ENCODE measurements at regions of chr22 and their contacts with region 1.

Region 1: DNA sequence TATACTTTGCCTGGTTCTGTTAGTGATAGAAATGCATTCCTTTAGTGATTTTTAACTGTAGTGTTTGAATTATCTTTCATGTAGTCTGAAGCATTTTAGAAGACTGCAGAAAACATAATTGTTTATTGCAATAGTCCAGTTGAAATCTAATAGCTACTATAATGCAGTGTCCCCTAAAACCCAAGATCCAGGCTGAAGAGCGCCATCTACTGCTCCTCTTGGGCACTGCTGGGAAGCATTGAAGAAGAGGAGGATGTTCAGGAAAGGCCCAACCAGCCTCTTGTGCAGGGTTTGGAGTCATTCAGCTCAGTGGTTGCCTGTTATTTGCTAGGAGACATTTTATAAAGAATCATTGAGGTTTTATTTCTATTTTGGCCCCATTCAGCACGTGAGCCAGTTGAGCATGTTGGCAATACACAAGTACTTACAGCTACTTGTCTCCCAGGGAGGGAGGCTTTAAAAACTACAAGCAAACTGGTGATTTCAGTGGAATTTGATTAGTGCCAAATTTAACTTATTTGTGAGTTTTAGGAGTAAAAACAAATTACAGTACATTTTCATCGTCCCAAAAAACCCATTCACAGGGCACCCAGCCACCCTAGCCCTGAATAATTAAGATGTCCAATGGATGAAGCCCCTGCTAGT is 74.9 kb upstream of the HORMAD2 start:
- DNase-seq: peak in 32 of 35 experiments; percentile 9 to 74 (median 46)
- ATAC-seq: peak; percentile 64 to 68 (median 67)
- H3K4me3 ChIP-seq: no peak overlapping the region
- H3K4me3 Mint-ChIP-seq: no peak overlapping the region
- H3K27ac ChIP-seq: no peak overlapping the region
- H3K27ac Mint-ChIP-seq: no peak overlapping the region
- H3K4me1 ChIP-seq: no peaks in the 10 kb centered on the region
- H3K4me1 Mint-ChIP-seq: peaks cover 4 to 8% (median 6%) of the 10 kb centered on the region in 3 donors
- H3K27me3 ChIP-seq: no peaks in the 10 kb centered on the region
- H3K27me3 Mint-ChIP-seq: no peaks in the 10 kb centered on the region

Region 2: GRCh38 chr22:29635734-29636357 is 369.5 kb before region 1 on chr22:
- CTCF ChIA-PET with region 1: interaction called in 1 of 2 experiments, 10 read pairs
- POLR2A ChIA-PET with region 1: no interaction called
- DNase-seq: peak in 1 of 35 experiments; percentile 45
- ATAC-seq: no peak
- H3K4me3 ChIP-seq: no peak overlapping the region
- H3K4me3 Mint-ChIP-seq: no peak overlapping the region
- H3K27ac ChIP-seq: no peak overlapping the region
- H3K27ac Mint-ChIP-seq: no peak overlapping the region
- H3K4me1 ChIP-seq: no peaks in the 10 kb centered on the region
- H3K4me1 Mint-ChIP-seq: peaks cover 32 to 37% (median 33%) of the 10 kb centered on the region in 3 donors
- H3K27me3 ChIP-seq: no peaks in the 10 kb centered on the region
- H3K27me3 Mint-ChIP-seq: no peaks in the 10 kb centered on the region

Region 3: GRCh38 chr22:29936186-29936585 is 69.1 kb before region 1 on chr22:
- CTCF ChIA-PET with region 1: no interaction called
- POLR2A ChIA-PET with region 1: no interaction called
- DNase-seq: no peak
- ATAC-seq: no peak
- H3K4me3 ChIP-seq: no peak overlapping the region
- H3K4me3 Mint-ChIP-seq: no peak overlapping the region
- H3K27ac ChIP-seq: no peak overlapping the region
- H3K27ac Mint-ChIP-seq: no peak overlapping the region
- H3K4me1 ChIP-seq: no peaks in the 10 kb centered on the region
- H3K4me1 Mint-ChIP-seq: peaks cover 48 to 62% (median 50%) of the 10 kb centered on the region in 3 donors
- H3K27me3 ChIP-seq: no peaks in the 10 kb centered on the region
- H3K27me3 Mint-ChIP-seq: no peaks in the 10 kb centered on the region

Region 4: GRCh38 chr22:29947410-29948384 is 57.6 kb before region 1 on chr22:
- CTCF ChIA-PET with region 1: no interaction called
- POLR2A ChIA-PET with region 1: no interaction called
- DNase-seq: no peak
- ATAC-seq: no peak
- H3K4me3 ChIP-seq: no peak overlapping the region
- H3K4me3 Mint-ChIP-seq: peak overlapping the region in 1 of 3 donors; percentile 22
- H3K27ac ChIP-seq: no peak overlapping the region
- H3K27ac Mint-ChIP-seq: no peak overlapping the region
- H3K4me1 ChIP-seq: peaks cover 7 to 16% of the 10 kb centered on the region in 2 experiments
- H3K4me1 Mint-ChIP-seq: peaks cover 72 to 73% (median 72%) of the 10 kb centered on the region in 3 donors
- H3K27me3 ChIP-seq: no peaks in the 10 kb centered on the region
- H3K27me3 Mint-ChIP-seq: no peaks in the 10 kb centered on the region

Region 5: GRCh38 chr22:30116362-30117117 is 111.2 kb after region 1 on chr22:
- CTCF ChIA-PET with region 1: no interaction called
- POLR2A ChIA-PET with region 1: no interaction called
- DNase-seq: no peak
- ATAC-seq: no peak
- H3K4me3 ChIP-seq: no peak overlapping the region
- H3K4me3 Mint-ChIP-seq: no peak overlapping the region
- H3K27ac ChIP-seq: no peak overlapping the region
- H3K27ac Mint-ChIP-seq: no peak overlapping the region
- H3K4me1 ChIP-seq: no peaks in the 10 kb centered on the region
- H3K4me1 Mint-ChIP-seq: peaks cover 0 to under 1% (median 0%) of the 10 kb centered on the region in 3 donors
- H3K27me3 ChIP-seq: no peaks in the 10 kb centered on the region
- H3K27me3 Mint-ChIP-seq: peaks cover 0 to 3% of the 10 kb centered on the region in 2 donors

Measured in T-cell (primary cell).